Activated T-helper 1 cell treated with anti-CD3 and anti-CD28 coated beads, Interleukin-12 subunit alpha, Interleukin-12 subunit beta, Interleukin-2, Interleukin-4 antibody, amounts not matched to agents 30 ng/mL and 10 ng/mL and 1 ng/mL, durations not matched to agents 14 hours and 24 hours and 36 hours (primary cell): ENCODE measurements at regions of chr12 and their contacts with region 1.

Region 1: GRCh38 chr12:92253301-92253700 is 107.7 kb upstream of the BTG1 start:
- DNase-seq: no peak
- H3K4me3 Mint-ChIP-seq: no peak overlapping the region
- H3K27ac Mint-ChIP-seq: no peak overlapping the region
- H3K4me1 Mint-ChIP-seq: peaks cover 6% of the 10 kb centered on the region
- H3K27me3 Mint-ChIP-seq: no peaks in the 10 kb centered on the region

Region 2: GRCh38 chr12:92268946-92269345 is 15.6 kb after region 1 on chr12:
- intact Hi-C with region 1: loop called (anchors 1 kb)
- DNase-seq: no peak
- H3K4me3 Mint-ChIP-seq: no peak overlapping the region
- H3K27ac Mint-ChIP-seq: no peak overlapping the region
- H3K4me1 Mint-ChIP-seq: peaks cover 7% of the 10 kb centered on the region
- H3K27me3 Mint-ChIP-seq: no peaks in the 10 kb centered on the region